T-cell (primary cell): ENCODE measurements at regions of chr5 and their contacts with region 1.

Region 1: DNA sequence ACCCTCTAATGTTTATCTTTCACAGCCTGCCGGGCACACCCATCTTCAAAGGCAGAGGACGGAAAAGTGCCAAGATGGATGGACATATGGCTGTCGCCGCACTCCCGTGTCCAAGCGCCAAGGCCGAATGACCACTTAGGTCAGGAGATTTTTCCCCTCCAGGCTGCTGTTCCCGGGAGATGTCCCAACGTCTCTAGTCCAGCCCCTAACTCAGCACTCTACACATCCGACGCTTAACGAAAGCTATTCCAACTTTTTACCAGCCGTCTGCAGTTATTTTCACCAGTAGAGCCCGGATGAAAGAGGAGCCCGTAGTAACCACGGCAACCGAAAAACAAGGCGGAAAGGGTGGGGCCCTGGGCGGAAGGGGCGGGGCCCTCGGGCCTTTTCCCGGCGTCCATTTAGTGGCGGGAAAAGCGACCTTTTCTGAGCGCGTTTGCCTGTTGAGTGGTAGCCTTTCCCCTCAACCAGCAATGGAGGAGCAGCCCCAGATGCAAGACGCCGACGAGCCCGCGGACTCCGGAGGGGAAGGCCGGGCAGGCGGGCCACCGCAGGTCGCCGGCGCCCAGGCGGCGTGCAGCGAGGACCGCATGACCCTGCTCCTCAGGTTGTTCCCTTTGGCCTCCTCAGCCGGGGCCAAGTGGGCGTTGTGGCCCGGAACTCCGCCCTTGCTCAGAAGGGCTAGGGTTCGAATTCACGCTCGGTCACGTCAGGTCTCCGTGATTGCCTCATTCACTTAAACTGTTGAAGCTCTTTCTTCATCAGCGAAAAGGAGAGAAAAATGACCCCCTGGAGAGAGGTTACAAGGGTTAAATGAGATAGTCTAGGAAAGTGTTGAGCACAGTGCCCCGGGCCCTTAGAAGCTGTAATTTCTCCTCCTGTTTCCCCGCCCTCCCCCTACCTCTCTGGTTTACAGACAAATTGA is at the start of gene CENPH:
- DNase-seq: peak; percentile 78 to 93 (median 87)
- ATAC-seq: peak; percentile 92 to 98 (median 98)
- H3K4me3 ChIP-seq: peak within 1 kb of the TSS; percentile 82 to 88
- H3K4me3 Mint-ChIP-seq: peak within 1 kb of the TSS; percentile 89
- H3K27ac ChIP-seq: peak within 1 kb of the TSS; percentile 39
- H3K27ac Mint-ChIP-seq: peak within 1 kb of the TSS; percentile 77 to 78
- H3K4me1 ChIP-seq: peaks cover 5 to 14% of the 10 kb centered on the region in 2 experiments
- H3K4me1 Mint-ChIP-seq: peaks cover 11 to 16% (median 15%) of the 10 kb centered on the region in 3 donors
- H3K27me3 ChIP-seq: no peaks in the 10 kb centered on the region
- H3K27me3 Mint-ChIP-seq: no peaks in the 10 kb centered on the region
- total RNA-seq, gene CENPH: 4.1 to 8.4 (median 6.5) TPM

Region 2: GRCh38 chr5:69166686-69167492 is 22.5 kb before region 1 on chr5 and contains the start of gene CCNB1:
- CTCF ChIA-PET with region 1: no interaction called
- POLR2A ChIA-PET with region 1: interaction called, 9 to 12 read pairs
- DNase-seq: peak; percentile 92 to 98 (median 95)
- ATAC-seq: peak; percentile 100
- H3K4me3 ChIP-seq: peak within 1 kb of the TSS; percentile 76 to 91
- H3K4me3 Mint-ChIP-seq: peak within 1 kb of the TSS; percentile 90 to 94 (median 92)
- H3K27ac ChIP-seq: peak within 1 kb of the TSS; percentile 44
- H3K27ac Mint-ChIP-seq: peak within 1 kb of the TSS; percentile 78 to 85
- H3K4me1 ChIP-seq: peaks cover 13 to 16% of the 10 kb centered on the region in 2 experiments
- H3K4me1 Mint-ChIP-seq: peaks cover 21 to 28% (median 26%) of the 10 kb centered on the region in 3 donors
- H3K27me3 ChIP-seq: no peaks in the 10 kb centered on the region
- H3K27me3 Mint-ChIP-seq: no peaks in the 10 kb centered on the region
- total RNA-seq, gene CCNB1: 1.6 to 4.1 (median 3.4) TPM

Region 3: GRCh38 chr5:69364414-69364813 is 175.0 kb after region 1 on chr5:
- CTCF ChIA-PET with region 1: no interaction called
- POLR2A ChIA-PET with region 1: no interaction called
- DNase-seq: peak in 1 of 35 experiments; percentile 48
- ATAC-seq: no peak
- H3K4me3 ChIP-seq: no peak overlapping the region
- H3K4me3 Mint-ChIP-seq: no peak overlapping the region
- H3K27ac ChIP-seq: no peak overlapping the region
- H3K27ac Mint-ChIP-seq: no peak overlapping the region
- H3K4me1 ChIP-seq: peaks cover 8 to 18% of the 10 kb centered on the region in 2 experiments
- H3K4me1 Mint-ChIP-seq: peaks cover 28 to 44% (median 43%) of the 10 kb centered on the region in 3 donors
- H3K27me3 ChIP-seq: no peaks in the 10 kb centered on the region
- H3K27me3 Mint-ChIP-seq: no peaks in the 10 kb centered on the region

Region 4: GRCh38 chr5:69517763-69518212 is 328.4 kb after region 1 on chr5:
- CTCF ChIA-PET with region 1: no interaction called
- POLR2A ChIA-PET with region 1: no interaction called
- DNase-seq: no peak
- ATAC-seq: no peak
- H3K4me3 ChIP-seq: no peak overlapping the region
- H3K4me3 Mint-ChIP-seq: no peak overlapping the region
- H3K27ac ChIP-seq: no peak overlapping the region
- H3K27ac Mint-ChIP-seq: no peak overlapping the region
- H3K4me1 ChIP-seq: no peaks in the 10 kb centered on the region
- H3K4me1 Mint-ChIP-seq: no peaks in the 10 kb centered on the region
- H3K27me3 ChIP-seq: peaks cover 0 to 3% of the 10 kb centered on the region in 2 experiments
- H3K27me3 Mint-ChIP-seq: peaks cover 0 to 2% of the 10 kb centered on the region in 2 donors